MCF 10A (cell line): ENCODE measurements at regions of chr14 and their contacts with region 1.

Region 1: DNA sequence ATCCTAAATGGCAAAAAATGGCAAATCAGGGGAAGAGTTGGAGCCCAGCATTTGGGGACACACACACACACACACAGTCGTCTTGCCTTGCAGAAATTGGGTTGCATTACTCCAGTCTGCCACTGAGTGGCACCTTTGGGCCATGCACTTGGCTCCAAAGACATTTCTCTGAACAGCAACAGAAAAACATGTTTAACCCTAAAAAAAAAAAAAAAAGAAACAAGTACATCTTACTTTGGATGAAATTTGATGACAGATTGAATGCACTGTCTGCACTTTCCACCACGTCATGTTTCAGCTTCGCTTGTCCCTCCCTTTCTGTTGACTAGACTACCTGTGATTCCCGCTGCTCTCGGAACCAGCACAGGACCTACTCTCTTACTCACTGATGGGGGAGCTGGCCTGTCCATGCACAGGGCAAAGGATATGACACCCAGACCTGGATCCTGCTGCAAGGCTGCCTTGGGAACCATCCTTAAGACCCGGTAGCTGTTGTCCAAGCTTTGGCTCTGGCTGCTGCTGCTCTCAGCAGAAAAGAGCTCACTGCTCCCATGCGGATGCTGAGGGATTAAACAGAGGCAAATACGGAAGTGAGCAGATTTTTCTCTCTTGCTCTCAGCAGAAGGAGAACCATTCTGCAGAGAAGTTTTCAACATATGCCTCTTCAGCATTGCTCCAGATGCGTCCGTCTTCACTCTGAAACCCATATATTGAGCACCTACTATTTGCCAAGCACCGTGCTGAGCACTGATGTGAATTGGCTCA is 376.8 kb downstream of the DPF3 start:
- DNase-seq: peak; percentile 68
- H3K4me3 Mint-ChIP-seq: no peak overlapping the region
- H3K27ac Mint-ChIP-seq: no peak overlapping the region
- H3K4me1 Mint-ChIP-seq: no peaks in the 10 kb centered on the region
- H3K27me3 Mint-ChIP-seq: peaks cover under 1% of the 10 kb centered on the region
- CTCF ChIP-seq: peak; percentile 76

Region 2: GRCh38 chr14:72476657-72477499 is 40.2 kb before region 1 on chr14:
- CTCF ChIA-PET with region 1: interaction called, 10 read pairs
- POLR2A ChIA-PET with region 1: no interaction called
- intact Hi-C with region 1: no loop called
- DNase-seq: peak; percentile 74
- H3K4me3 Mint-ChIP-seq: peak overlapping the region; percentile 40
- H3K27ac Mint-ChIP-seq: no peak overlapping the region
- H3K4me1 Mint-ChIP-seq: peaks cover 14% of the 10 kb centered on the region
- H3K27me3 Mint-ChIP-seq: peaks cover 30% of the 10 kb centered on the region
- CTCF ChIP-seq: no peak

Region 3: DNA sequence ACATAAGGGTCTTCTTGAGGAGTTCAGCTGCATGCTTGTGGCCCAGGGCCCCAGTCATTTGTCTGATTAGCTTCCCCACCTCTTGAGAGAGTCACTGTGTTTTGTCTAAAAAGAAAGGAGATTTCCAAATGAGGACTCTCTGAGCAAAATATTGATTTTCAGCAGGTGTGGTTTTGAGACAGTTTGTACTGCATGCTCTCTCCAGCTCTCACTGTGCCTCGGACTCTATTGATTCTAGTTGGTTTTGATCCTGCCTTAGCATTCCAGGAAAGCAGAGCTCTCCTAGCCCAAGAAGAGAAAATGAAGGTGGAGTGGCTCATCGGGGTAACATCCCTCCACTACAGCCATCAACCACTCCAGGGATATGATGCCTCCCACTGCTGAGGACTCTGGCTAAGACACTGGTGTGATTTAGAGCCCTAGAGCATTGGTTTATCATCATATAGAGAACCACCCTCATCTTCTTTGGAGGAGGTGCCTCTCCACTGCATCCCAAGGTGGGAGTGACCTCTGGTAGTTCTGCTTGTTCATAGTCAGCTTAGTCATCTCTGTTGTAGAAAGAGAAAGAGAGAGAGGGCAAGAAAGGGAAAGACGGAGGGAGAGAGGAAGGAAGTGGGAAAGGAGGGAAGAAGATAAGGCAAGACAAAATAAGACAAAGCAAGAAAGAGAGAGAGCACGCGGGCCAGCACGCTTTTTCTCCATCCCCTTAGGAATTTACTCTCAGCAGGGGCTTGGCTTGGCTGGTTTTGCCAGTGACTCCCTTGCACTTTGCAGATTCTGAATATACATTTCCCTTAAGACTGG is 11.1 kb after region 1 on chr14:
- CTCF ChIA-PET with region 1: interaction called, 52 read pairs
- POLR2A ChIA-PET with region 1: interaction called, 3 read pairs
- intact Hi-C with region 1: no loop called
- DNase-seq: no peak
- H3K4me3 Mint-ChIP-seq: no peak overlapping the region
- H3K27ac Mint-ChIP-seq: no peak overlapping the region
- H3K4me1 Mint-ChIP-seq: peaks cover 12% of the 10 kb centered on the region
- H3K27me3 Mint-ChIP-seq: no peaks in the 10 kb centered on the region
- CTCF ChIP-seq: no peak

Region 4: DNA sequence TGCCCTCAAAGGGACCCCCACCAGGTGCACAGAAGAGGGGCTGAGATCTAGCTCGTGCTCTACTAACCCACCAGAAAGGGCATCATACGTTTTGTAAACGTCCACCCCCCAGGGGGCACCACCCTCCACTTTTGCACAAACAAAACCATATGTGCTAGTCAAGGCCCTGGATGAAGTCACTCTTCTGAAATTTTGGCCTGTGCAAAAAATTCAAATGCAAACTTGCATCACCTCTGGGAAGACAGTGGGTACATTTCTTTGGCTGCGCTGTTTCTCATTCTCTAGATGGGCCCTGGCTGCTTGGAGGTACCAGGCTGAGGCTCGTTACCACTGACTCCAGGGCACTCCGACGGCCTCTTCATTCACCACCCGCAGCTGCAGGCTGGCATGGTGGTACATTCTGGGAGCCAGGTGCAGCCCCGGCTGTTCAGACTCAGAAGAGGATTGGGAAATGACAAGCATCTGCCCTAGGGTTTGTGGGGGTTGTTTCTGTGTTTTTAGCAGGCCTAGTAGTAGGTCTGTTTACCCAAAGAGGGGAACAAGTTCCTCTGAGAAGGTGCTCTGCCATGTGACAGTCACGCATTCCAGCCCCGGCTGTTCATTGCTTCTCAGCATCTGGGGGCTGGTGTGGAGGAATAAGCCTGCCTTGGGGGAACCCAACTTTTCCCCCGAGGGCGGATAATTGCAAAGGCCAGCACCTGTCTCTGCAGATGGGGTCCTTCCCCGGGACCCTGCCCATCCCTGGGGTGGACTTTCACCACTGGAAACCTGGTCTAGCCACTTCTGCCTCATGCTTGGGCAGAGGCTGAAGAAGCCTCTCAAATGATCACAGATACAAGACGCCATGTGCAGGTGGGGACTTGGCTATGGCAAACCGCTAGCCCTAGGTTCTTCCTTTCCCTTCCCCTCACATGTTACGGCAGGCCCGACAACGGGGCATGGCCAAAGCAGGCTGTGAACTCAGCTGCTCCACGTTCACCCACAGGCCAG is 229.2 kb after region 1 on chr14:
- CTCF ChIA-PET with region 1: interaction called, 4 read pairs
- POLR2A ChIA-PET with region 1: no interaction called
- intact Hi-C with region 1: loop called (anchors 2 kb)
- DNase-seq: peak; percentile 61
- H3K4me3 Mint-ChIP-seq: no peak overlapping the region
- H3K27ac Mint-ChIP-seq: peak overlapping the region; percentile 76
- H3K4me1 Mint-ChIP-seq: peaks cover 17% of the 10 kb centered on the region
- H3K27me3 Mint-ChIP-seq: no peaks in the 10 kb centered on the region
- CTCF ChIP-seq: peak; percentile 22

Region 5: GRCh38 chr14:72904840-72905561 is 387.9 kb after region 1 on chr14:
- CTCF ChIA-PET with region 1: interaction called, 295 read pairs
- POLR2A ChIA-PET with region 1: interaction called, 14 read pairs
- intact Hi-C with region 1: loop called (anchors 1 kb)
- DNase-seq: peak; percentile 82
- H3K4me3 Mint-ChIP-seq: no peak overlapping the region
- H3K27ac Mint-ChIP-seq: no peak overlapping the region
- H3K4me1 Mint-ChIP-seq: peaks cover 22% of the 10 kb centered on the region
- H3K27me3 Mint-ChIP-seq: no peaks in the 10 kb centered on the region
- CTCF ChIP-seq: peak; percentile 90

Region 6: DNA sequence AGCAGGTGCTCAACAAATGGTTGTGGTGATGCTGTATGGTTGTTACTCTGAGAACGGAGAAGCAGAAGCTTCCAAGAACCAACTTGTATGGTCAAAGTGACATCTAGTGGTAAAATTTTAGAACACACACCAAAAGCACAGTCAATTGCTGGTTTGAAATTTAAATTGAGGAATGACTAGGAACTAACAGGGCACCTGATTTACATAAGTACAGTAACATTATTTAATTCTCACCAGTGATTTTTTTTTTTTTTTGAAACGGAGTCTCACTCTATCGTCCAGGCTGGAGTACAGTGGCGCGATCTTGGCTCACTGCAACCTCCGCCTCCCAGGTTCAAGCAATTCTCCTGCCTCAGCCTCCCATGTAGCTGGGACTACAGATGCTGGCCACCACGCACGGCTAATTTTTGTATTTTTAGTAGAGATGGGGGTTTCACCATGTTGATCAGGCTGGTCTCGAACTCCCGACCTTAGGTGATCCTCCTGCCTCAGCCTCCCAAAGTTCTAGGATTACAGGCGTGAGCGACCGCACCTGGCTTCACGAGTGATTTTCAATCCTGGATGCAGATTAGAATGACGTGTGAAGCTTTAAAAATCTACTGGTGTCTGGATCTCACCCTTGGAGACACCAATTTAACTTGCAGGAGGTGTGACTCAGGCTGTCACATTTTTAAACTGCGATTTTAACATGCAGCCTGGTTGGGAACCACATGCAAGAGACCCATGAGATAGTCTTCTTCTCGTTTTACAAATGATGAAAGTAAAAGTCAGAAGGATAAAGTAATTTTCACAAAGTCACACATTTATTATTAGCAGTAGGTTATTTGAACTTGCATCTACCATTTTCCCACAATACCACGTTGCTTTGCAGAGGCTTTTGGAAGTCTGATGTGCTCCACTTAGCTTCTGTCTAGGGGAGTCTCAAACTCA is 955.3 kb after region 1 on chr14:
- CTCF ChIA-PET with region 1: no interaction called
- POLR2A ChIA-PET with region 1: no interaction called
- intact Hi-C with region 1: loop called (anchors 10 kb)
- DNase-seq: peak; percentile 67
- H3K4me3 Mint-ChIP-seq: no peak overlapping the region
- H3K27ac Mint-ChIP-seq: no peak overlapping the region
- H3K4me1 Mint-ChIP-seq: peaks cover 5% of the 10 kb centered on the region
- H3K27me3 Mint-ChIP-seq: no peaks in the 10 kb centered on the region
- CTCF ChIP-seq: peak; percentile 68